ENCODE measurements at regions of chr9 and their contacts with region 1.

Region 1: GRCh38 chr9:108953983-108954574 is 19.9 kb downstream of the ABITRAM start:
- H3K4me3 ChIP-seq: no peak overlapping the region
- H3K27ac ChIP-seq: no peak overlapping the region
- H3K4me1 ChIP-seq: peaks cover 11% of the 10 kb centered on the region; the same call in 1 of the 2 replicates
- CTCF ChIP-seq: no peak

Region 2: GRCh38 chr9:108671176-108671575 is 282.9 kb before region 1 on chr9:
- CTCF ChIA-PET with region 1: no interaction called
- POLR2A ChIA-PET with region 1: no interaction called
- H3K4me3 ChIP-seq: no peak overlapping the region
- H3K27ac ChIP-seq: no peak overlapping the region
- H3K4me1 ChIP-seq: no peaks in the 10 kb centered on the region
- CTCF ChIP-seq: 0 out of 2 replicates have a peak, but pooled peaks have one; percentile 9

Region 3: GRCh38 chr9:108937561-108938305 is 16.3 kb before region 1 on chr9:
- CTCF ChIA-PET with region 1: interaction called, 21 read pairs
- POLR2A ChIA-PET with region 1: no interaction called
- H3K4me3 ChIP-seq: no peak overlapping the region
- H3K27ac ChIP-seq: no peak overlapping the region
- H3K4me1 ChIP-seq: no peaks in the 10 kb centered on the region
- CTCF ChIP-seq: no peak